WTC11 (cell line): ENCODE measurements at regions of chr4 and their contacts with region 1.

Region 1: GRCh38 chr4:3324093-3324815 is 31.4 kb downstream of the RGS12 start:
- DNase-seq: peak; percentile 78
- ATAC-seq: peak; percentile 93
- H3K4me3 Mint-ChIP-seq: no peak overlapping the region
- H3K27ac Mint-ChIP-seq: no peak overlapping the region
- H3K4me1 Mint-ChIP-seq: peaks cover 16% of the 10 kb centered on the region
- H3K27me3 Mint-ChIP-seq: no peaks in the 10 kb centered on the region
- CTCF ChIP-seq: no peak

Region 2: GRCh38 chr4:3292571-3293400 is 31.5 kb before region 1 on chr4 and contains the start of gene RGS12:
- CTCF ChIA-PET with region 1: interaction called, 45 read pairs
- POLR2A ChIA-PET with region 1: no interaction called
- DNase-seq: peak; percentile 96
- ATAC-seq: peak; percentile 89
- H3K4me3 Mint-ChIP-seq: peak within 1 kb of the TSS; percentile 79
- H3K27ac Mint-ChIP-seq: peak within 1 kb of the TSS; percentile 53; the same call in 1 of the 2 replicates
- H3K4me1 Mint-ChIP-seq: peaks cover 26% of the 10 kb centered on the region
- H3K27me3 Mint-ChIP-seq: peaks cover 23% of the 10 kb centered on the region
- CTCF ChIP-seq: no peak
- total RNA-seq, gene RGS12: 21.0 to 24.7 TPM (median 24.2 TPM) in 3 replicates